ENCODE measurements at regions of chr2 and their contacts with region 1.

Region 1: GRCh38 chr2:130181325-130181879 is at the start of gene SMPD4:
- DNase-seq: peak; percentile 96
- H3K4me3 Mint-ChIP-seq: peak within 1 kb of the TSS; percentile 85
- H3K27ac Mint-ChIP-seq: peak within 1 kb of the TSS; percentile 92
- H3K4me1 Mint-ChIP-seq: peaks cover 5% of the 10 kb centered on the region
- H3K27me3 Mint-ChIP-seq: no peaks in the 10 kb centered on the region
- CTCF ChIP-seq: no peak
- total RNA-seq, gene SMPD4: 40.2 and 41.1 TPM in 2 replicates

Region 2: DNA sequence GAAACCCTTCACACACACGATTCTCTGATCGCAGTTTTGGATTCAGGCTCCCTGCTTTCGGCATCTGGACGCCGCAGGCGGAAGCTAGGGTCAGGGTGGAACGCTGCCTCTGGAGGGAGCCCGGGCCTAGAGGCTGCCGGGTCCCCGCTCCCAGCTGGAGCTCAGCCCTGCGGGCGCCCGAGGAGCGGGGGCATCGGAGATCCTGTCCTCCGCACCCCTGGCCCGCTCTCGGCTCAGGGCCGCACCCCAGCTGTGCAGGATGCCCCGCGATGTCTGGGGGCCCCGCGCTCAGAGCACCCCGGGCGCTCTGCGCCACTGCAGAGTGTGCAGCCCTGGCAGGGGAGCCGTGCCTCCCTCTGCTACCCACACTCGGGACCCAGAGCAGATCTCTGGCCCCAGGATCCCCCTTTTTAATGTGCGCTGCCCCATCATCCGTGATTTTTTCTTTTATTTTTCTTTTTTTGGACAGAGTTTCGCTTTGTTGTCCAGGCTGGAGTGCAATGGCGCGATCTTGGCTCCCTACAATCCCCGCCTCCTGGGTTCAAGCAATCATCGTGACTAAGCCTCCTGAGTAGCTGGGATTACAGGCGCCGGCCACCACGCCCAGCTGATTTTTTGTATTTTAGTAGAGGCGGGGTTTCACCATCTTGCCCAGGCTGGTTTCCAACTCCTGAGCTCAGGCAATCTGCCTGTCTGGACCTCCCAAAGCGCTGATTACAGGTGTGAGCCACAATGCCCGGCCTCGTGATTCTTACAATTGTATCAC is 71.7 kb after region 1 on chr2:
- CTCF ChIA-PET with region 1: interaction called, 4 read pairs
- POLR2A ChIA-PET with region 1: no interaction called
- intact Hi-C with region 1: loop called (anchors 10 kb)
- DNase-seq: peak; percentile 63
- H3K4me3 Mint-ChIP-seq: peak overlapping the region; percentile 65
- H3K27ac Mint-ChIP-seq: no peak overlapping the region
- H3K4me1 Mint-ChIP-seq: peaks cover 5% of the 10 kb centered on the region
- H3K27me3 Mint-ChIP-seq: peaks cover 76% of the 10 kb centered on the region
- CTCF ChIP-seq: no peak

Region 3: DNA sequence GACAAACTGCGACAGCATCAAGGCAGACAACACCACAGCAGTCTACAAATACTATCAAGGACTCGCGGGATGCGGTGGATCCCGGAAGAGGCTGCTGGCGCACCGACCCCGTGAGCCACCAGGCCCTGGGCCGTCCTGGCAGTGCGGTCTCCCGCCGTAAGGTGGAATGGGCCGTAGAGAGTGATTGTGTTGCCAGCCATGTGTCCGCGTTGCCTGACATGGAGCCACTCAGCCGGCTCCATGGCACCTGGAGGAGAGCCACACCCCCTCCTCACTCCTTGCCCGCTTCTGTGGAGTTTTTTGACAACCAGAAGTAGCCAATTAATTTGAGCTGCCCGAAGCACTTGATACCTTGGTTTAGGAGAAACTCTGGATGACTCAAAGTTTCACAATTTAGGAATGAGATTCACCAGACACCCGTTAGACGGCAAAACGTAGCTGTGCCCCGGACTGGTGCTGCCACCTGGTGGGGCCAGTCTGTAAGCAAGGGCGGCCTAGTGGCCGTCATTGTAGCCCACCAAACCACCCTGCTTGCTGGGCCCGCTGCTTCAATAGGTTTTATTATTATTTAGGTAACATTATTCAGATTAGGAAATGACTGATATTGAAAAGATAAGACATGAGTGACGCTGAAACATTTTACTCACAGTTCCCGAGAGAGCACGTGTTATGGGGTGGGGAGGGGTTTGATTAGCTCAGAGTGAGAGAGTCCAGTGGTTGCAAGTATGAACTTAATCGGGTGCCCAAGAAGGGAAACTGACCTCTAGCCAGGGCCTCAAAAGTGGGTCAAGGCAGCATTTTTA is 151.1 kb after region 1 on chr2:
- CTCF ChIA-PET with region 1: interaction called, 90 read pairs
- POLR2A ChIA-PET with region 1: interaction called, 29 read pairs
- intact Hi-C with region 1: loop called (anchors 1 kb)
- DNase-seq: peak; percentile 84
- H3K4me3 Mint-ChIP-seq: no peak overlapping the region
- H3K27ac Mint-ChIP-seq: no peak overlapping the region
- H3K4me1 Mint-ChIP-seq: peaks cover 15% of the 10 kb centered on the region
- H3K27me3 Mint-ChIP-seq: no peaks in the 10 kb centered on the region
- CTCF ChIP-seq: peak; percentile 95

Measured in MCF 10A (cell line).